Activated T-helper 2 cell treated with anti-CD3 and anti-CD28 coated beads, Interferon-gamma antibody, Interleukin-2, Interleukin-4, amounts not matched to agents 10 μg/mL and 5 μg/mL and 100 μg/mL, durations not matched to agents 14 hours and 24 hours and 36 hours (primary cell): ENCODE measurements at regions of chr3 and their contacts with region 1.

Region 1: DNA sequence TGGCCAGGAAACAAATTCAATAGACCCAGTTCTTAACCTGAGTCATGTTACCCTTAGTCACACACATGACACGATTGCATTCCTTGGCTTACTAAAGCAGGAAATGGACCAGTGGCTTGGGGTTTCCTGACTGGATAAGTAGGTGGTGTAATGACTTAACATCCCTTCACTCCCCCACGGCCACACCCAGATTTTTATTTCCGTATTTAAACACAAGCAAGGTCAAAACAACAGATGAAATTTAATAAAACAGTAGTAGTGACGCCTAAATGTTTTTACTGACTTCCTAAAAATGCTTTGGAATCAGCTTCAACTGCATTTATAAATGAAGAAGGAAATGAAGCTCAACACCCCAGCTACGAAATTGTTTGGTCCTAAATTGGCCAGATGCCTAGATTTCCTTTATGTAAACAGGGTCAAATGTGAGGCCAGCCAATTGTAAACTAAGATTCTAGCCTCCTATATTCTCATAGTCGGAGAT is 324.3 kb downstream of the CHST2 start:
- DNase-seq: no peak
- H3K4me3 Mint-ChIP-seq: peak overlapping the region; percentile 11
- H3K27ac Mint-ChIP-seq: no peak overlapping the region
- H3K4me1 Mint-ChIP-seq: peaks cover 29% of the 10 kb centered on the region
- H3K27me3 Mint-ChIP-seq: peaks cover 5% of the 10 kb centered on the region

Region 2: GRCh38 chr3:143060906-143061305 is 383.0 kb before region 1 on chr3:
- intact Hi-C with region 1: loop called (anchors 10 kb)
- DNase-seq: no peak
- H3K4me3 Mint-ChIP-seq: no peak overlapping the region
- H3K27ac Mint-ChIP-seq: no peak overlapping the region
- H3K4me1 Mint-ChIP-seq: peaks cover 19% of the 10 kb centered on the region
- H3K27me3 Mint-ChIP-seq: no peaks in the 10 kb centered on the region

Region 3: GRCh38 chr3:143363276-143363675 is 80.6 kb before region 1 on chr3:
- intact Hi-C with region 1: no loop called
- DNase-seq: no peak
- H3K4me3 Mint-ChIP-seq: no peak overlapping the region
- H3K27ac Mint-ChIP-seq: no peak overlapping the region
- H3K4me1 Mint-ChIP-seq: peaks cover 22% of the 10 kb centered on the region
- H3K27me3 Mint-ChIP-seq: no peaks in the 10 kb centered on the region

Region 4: GRCh38 chr3:143535994-143536784 is 92.3 kb after region 1 on chr3:
- intact Hi-C with region 1: loop called (anchors 5 kb)
- DNase-seq: no peak
- H3K4me3 Mint-ChIP-seq: no peak overlapping the region
- H3K27ac Mint-ChIP-seq: no peak overlapping the region
- H3K4me1 Mint-ChIP-seq: peaks cover 12% of the 10 kb centered on the region
- H3K27me3 Mint-ChIP-seq: peaks cover 14% of the 10 kb centered on the region

Region 5: DNA sequence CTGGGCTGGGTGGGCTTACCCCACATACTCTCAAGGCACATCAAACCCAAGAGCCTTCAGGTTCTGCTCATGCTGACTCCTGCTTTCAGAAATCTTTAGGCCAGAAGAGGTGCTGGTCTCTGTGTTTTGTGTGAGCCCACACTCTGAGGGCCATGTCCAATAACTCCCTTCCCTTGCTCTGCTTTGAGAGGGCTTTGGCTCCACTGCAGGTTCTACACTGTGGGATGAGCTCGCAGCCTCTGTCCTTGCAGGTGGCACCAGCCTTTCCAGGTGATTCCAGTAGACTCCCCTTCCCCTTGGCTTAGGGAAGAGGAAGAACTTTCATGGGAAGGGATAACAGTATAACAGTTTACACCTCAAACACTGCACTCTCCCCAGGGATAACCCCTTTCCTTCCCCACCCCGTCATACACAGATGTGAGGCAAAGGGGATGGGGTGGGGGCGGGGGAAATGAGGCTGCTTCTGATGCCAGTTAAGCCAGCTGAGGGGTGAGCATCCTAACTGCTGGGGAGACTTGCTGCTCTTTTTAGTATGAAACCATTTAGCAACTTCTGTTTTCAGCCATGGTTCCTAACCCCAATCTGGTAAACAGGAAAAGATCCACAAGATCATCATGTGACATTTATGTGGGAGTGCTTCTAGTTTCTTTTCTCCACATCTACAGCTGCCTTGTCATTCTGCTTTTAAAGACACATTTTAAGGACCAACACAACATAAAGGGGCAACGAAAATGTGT is 142.0 kb after region 1 on chr3:
- intact Hi-C with region 1: loop called (anchors 5 kb)
- DNase-seq: no peak
- H3K4me3 Mint-ChIP-seq: no peak overlapping the region
- H3K27ac Mint-ChIP-seq: no peak overlapping the region
- H3K4me1 Mint-ChIP-seq: peaks cover 19% of the 10 kb centered on the region
- H3K27me3 Mint-ChIP-seq: no peaks in the 10 kb centered on the region

Region 6: DNA sequence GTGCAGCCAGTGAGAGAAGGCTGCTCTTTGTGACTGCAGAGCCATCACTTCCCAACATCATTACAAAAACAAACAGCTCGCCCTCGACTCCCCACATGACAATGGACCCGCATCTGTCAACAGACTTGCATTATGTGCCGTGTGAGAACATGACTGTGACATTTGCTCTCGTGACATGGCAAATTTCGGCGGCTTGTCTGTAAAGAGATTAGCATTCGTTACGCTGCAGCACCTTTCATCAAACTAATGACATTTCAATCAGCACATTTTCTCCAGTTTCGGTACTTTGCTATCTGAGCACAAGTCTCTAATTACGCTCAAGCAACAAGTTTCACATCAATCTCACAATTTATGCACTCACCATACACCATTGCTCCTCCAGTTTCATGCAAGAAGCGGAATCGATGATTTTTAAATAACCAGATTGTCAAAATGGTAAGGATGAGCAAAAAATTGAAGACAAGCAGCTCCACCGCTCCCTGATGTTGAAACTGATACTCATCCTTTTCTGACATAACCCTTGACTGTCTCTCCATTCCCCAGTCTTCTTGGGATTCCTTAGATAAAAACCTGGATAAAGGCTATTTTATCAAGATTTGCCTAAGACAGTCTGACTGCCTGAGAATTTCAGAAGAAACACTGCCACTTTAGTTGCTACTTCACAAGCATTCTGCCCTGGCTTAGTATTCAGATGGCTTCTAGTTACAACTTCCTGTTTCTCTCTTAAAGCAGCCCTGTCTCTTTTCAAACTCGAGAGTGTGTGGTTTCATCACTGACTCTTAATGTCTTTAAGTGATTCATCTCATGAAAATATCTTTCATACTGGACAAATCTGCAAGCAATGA is 404.1 kb after region 1 on chr3 and contains the start of gene SLC9A9:
- intact Hi-C with region 1: loop called (anchors 10 kb)
- DNase-seq: no peak
- H3K4me3 Mint-ChIP-seq: peak within 1 kb of the TSS; percentile 90
- H3K27ac Mint-ChIP-seq: peak within 1 kb of the TSS; percentile 83
- H3K4me1 Mint-ChIP-seq: peaks cover 47% of the 10 kb centered on the region
- H3K27me3 Mint-ChIP-seq: peaks cover 16% of the 10 kb centered on the region
- total RNA-seq, gene SLC9A9: 1.6 and 2.0 TPM in 2 replicates